ENCODE measurements at regions of chr22 and their contacts with region 1.

Region 1: DNA sequence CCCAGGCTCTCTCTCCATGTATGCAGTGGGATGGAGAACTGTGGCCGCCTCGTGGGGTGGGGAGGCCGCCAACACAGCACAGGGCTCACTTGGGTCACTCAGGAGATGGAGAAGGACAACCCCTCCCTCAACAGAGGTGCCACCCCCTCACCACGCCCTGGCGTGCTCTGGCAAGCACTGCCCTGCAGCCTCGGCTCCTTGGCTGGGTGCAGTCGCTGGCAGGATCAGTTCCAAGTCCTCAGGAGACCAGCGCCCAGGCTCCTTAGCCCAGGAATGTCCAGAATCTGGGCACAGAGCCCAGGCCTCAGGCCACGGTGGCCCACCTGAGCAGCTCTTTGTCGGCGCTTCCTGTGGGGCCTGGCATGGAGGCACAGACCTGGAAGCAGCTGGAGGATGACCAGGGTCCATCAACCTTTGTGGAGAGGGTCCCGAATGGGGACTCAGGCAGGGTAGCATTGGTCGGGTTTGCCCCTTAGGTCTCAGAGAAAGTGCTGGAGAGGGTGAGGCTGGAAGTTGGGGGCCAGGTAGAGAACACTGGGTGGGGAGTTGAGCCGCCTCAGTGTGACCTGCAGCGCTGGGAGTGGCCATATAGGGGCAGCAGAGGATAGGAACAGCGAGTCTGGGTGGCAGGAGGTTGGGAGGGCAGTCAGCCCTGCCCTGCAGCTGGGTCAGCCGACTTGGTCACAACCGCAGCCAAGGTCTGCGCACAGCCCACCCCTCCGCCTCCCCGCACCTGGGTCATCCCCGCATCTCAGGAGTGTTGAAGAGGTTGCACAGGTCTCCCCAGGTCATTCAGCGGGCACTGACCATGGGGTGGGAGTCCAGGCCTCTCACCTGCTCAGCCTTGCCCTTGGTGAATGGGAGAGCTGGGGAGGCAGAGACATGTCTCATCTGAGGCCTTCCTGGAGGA is 8.2 kb downstream of the SUSD2 start:
- DNase-seq: peak; percentile 89
- H3K4me3 Mint-ChIP-seq: peak overlapping the region; percentile 13
- H3K27ac Mint-ChIP-seq: peak overlapping the region; percentile 61
- H3K4me1 Mint-ChIP-seq: peaks cover 27% of the 10 kb centered on the region
- H3K27me3 Mint-ChIP-seq: no peaks in the 10 kb centered on the region
- CTCF ChIP-seq: peak; percentile 92

Region 2: DNA sequence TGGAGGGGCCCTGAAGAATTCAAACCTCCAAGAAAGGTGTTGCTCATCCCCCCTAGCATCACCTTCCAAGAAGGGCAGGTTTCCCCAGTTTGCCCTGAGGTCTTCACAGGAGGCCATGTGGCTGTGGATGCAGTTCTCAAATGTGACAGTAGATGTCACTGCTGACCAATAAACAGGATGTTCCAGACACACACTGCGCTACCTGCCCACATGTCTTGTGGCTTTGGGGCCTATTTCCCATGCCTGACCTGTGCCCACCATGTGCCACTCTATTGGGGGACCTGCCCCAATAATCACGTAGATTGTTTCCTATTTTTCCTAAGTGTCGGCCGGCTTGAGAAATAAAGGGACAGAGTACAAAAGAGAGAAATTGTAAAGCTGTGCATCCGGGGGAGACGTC is 205.1 kb before region 1 on chr22:
- CTCF ChIA-PET with region 1: no interaction called
- intact Hi-C with region 1: loop called (anchors 10 kb)
- DNase-seq: peak; percentile 65
- H3K4me3 Mint-ChIP-seq: no peak overlapping the region
- H3K27ac Mint-ChIP-seq: no peak overlapping the region
- H3K4me1 Mint-ChIP-seq: no peaks in the 10 kb centered on the region
- H3K27me3 Mint-ChIP-seq: no peaks in the 10 kb centered on the region
- CTCF ChIP-seq: peak; percentile 62

Region 3: GRCh38 chr22:24216541-24217209 is 27.2 kb after region 1 on chr22:
- CTCF ChIA-PET with region 1: no interaction called
- intact Hi-C with region 1: no loop called
- DNase-seq: no peak
- H3K4me3 Mint-ChIP-seq: no peak overlapping the region
- H3K27ac Mint-ChIP-seq: no peak overlapping the region
- H3K4me1 Mint-ChIP-seq: no peaks in the 10 kb centered on the region
- H3K27me3 Mint-ChIP-seq: no peaks in the 10 kb centered on the region
- CTCF ChIP-seq: no peak

Region 4: DNA sequence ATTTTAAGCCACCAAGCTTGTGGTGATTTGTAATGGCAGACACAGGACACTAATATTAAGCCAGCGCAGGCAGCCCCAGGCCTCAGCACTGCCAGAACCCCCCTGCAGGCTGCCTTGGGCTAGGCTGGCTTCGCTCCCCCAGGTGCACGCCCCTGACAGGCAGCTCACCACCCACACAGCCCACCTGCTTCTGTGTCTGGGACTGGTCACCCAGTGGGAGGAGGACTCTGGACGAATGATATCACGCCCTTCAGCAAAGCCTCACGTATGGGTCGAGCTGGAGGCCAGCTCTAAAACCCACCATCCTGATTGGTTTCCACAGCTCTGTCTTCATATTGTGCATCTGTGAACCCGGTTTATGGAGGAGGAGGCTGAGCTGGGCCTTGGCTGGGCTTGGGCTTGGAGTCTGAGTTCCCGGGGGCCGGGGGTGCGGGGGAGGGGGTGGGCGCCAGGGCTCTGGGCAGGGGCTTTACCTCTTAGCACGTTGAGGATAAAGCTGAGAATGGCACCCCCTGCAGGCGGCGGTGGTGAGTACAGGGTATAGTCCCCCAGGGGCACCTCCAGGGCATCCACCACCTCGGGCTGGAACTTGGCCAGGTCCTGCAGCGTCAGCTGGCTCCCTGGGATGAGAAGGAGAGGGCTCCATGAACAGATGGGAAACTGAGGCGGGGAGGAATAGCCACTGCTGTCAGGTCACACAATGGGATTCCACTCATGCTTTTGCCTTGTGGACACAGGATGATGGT is 41.6 kb after region 1 on chr22:
- CTCF ChIA-PET with region 1: interaction called, 21 read pairs
- intact Hi-C with region 1: no loop called
- DNase-seq: peak; percentile 67
- H3K4me3 Mint-ChIP-seq: no peak overlapping the region
- H3K27ac Mint-ChIP-seq: no peak overlapping the region
- H3K4me1 Mint-ChIP-seq: no peaks in the 10 kb centered on the region
- H3K27me3 Mint-ChIP-seq: no peaks in the 10 kb centered on the region
- CTCF ChIP-seq: peak; percentile 30

Region 5: GRCh38 chr22:24247011-24247507 is 57.6 kb after region 1 on chr22:
- CTCF ChIA-PET with region 1: interaction called, 59 read pairs
- intact Hi-C with region 1: loop called (anchors 2 kb)
- DNase-seq: no peak
- H3K4me3 Mint-ChIP-seq: no peak overlapping the region
- H3K27ac Mint-ChIP-seq: no peak overlapping the region
- H3K4me1 Mint-ChIP-seq: peaks cover 21% of the 10 kb centered on the region
- H3K27me3 Mint-ChIP-seq: no peaks in the 10 kb centered on the region
- CTCF ChIP-seq: no peak

Region 6: DNA sequence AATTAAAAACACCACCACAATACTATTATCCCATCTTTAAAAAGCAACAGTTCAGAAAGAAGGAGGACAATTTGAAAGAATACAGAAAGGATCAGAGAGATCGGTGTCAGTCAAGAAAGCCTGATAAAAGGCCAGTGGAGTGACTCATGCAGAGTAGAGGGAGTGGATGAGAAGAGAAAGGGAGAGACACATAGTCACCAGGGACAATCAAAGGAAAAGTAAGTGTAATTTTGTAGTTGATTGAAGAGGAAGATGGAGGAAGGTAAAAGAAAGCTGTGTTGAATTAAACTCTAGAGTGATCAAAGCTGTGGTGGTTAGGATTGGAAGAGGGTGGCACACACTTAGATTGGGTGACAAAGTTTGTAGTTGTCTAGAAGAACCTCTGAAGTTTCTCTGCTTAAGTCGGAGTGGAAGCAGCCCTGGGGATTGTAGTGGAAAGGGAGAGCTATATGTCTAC is 95.3 kb after region 1 on chr22:
- CTCF ChIA-PET with region 1: no interaction called
- intact Hi-C with region 1: no loop called
- DNase-seq: no peak
- H3K4me3 Mint-ChIP-seq: no peak overlapping the region
- H3K27ac Mint-ChIP-seq: no peak overlapping the region
- H3K4me1 Mint-ChIP-seq: peaks cover 48% of the 10 kb centered on the region
- H3K27me3 Mint-ChIP-seq: no peaks in the 10 kb centered on the region
- CTCF ChIP-seq: no peak